GM12878 (cell line): ENCODE measurements at regions of chr11 and their contacts with region 1.

Region 1: DNA sequence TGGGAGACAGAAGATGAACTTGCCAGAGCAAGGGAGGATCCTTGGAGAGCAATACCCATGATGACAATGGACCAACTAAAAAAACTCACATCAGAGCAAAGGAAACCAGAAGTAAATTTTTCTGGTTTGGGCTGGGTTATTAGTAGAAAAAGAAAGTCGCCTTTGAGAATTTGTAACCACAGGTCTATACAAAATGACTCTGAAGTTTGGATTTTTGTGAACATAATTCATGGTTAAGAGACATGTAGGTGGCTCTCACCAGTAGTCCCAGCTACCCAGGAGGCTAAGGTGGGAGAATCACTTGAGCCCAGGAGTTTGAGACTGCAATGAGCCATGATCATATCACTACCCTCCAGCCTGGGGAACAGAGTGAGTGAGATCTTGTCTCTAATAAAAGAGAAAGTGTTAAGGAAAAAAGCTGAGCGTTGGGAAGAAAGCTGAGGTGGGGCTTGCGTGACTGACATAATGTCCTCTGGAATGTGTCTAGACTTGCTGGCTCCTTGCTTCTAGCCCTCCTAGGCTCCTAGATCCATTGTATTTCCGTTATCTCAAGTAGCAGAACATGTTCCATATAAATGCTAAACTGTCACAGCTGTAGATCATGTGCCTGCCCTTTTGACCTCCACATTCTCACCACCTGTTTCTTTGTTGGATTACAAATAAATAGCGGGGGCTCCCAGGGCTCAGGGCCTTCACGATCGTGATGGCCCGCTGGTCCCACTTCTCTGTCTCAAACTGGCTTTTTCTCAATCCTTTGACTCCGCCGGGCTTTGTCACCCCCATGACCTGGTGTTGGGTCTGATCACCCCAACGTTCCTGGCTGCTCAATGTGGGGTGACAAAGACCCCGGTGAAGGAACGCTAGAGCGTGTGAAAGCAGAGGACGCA is 56.2 kb upstream of the SC5D start:
- DNase-seq: peak; percentile 74
- ATAC-seq: peak; percentile 85
- H3K4me3 ChIP-seq: peak overlapping the region; percentile 57
- H3K27ac ChIP-seq: peak overlapping the region; percentile 95
- H3K4me1 ChIP-seq: peaks cover 32% of the 10 kb centered on the region
- H3K27me3 ChIP-seq: no peaks in the 10 kb centered on the region
- CTCF ChIP-seq: no peak
- EP300 ChIP-seq: no peak; a peak in 1 of 4 replicates
- POLR2A ChIP-seq: no peak
- RAD21 ChIP-seq: no peak

Region 2: DNA sequence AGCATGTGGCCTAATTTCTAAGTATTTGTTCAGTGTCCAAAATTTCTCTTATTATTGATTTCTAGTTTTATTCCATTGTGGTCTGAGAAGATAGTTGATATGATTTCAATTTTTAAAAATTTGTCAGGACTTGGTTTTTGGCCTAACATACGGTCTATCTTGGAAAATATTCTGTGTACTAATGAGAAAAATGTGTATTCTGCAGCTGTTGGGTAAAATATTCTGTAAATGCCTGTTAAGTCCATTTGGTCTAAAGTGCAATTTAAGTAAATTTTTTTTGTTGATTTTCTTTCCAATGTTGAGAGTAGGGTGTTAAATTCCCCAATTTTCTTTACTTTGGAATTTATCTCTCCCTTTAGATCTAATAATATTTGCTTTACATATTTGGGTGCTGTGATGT is 57.1 kb before region 1 on chr11:
- CTCF ChIA-PET with region 1: no interaction called
- POLR2A ChIA-PET with region 1: no interaction called
- RAD21 ChIA-PET with region 1: no interaction called
- SMC1A ChIA-PET with region 1: no interaction called
- in situ Hi-C with region 1: no loop called
- intact Hi-C with region 1: no loop called
- DNase-seq: no peak
- ATAC-seq: no peak
- H3K4me3 ChIP-seq: no peak overlapping the region
- H3K27ac ChIP-seq: no peak overlapping the region
- H3K4me1 ChIP-seq: no peaks in the 10 kb centered on the region
- H3K27me3 ChIP-seq: no peaks in the 10 kb centered on the region
- CTCF ChIP-seq: no peak
- EP300 ChIP-seq: no peak
- POLR2A ChIP-seq: no peak
- RAD21 ChIP-seq: no peak

Region 3: DNA sequence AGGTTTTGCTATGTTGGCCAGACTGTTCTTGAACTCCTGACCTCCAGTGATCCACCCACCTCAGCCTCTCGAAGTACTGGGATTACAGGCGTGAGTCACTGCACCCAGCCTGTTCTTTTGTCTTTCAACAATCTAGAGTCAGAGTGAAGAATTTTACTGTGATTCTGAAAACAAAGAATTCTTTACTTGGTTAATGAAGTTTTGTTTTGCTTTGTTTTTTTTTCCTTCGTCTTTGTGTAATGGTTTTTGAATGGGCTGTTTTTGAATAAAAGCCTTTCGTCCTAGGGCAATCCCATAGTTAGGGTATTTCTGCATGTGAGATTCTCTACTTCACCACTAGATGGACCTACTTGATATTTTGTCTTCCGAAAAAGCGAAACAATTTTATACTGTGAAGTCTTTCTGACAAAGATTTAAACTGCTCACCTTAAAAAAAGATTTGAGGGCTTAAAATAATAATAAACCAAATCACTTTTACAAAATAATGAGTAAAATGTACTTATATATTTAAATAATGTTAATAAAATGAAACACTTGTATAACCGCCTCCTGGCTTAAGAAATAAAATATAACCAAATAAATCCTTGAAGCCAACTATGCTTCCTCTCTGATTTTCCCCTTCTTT is 12.8 kb after region 1 on chr11:
- CTCF ChIA-PET with region 1: interaction called, 11 read pairs
- POLR2A ChIA-PET with region 1: no interaction called
- RAD21 ChIA-PET with region 1: interaction called, 5 read pairs
- SMC1A ChIA-PET with region 1: interaction called, 15 read pairs
- in situ Hi-C with region 1: no loop called
- intact Hi-C with region 1: no loop called
- DNase-seq: no peak
- ATAC-seq: peak; percentile 91
- H3K4me3 ChIP-seq: no peak overlapping the region
- H3K27ac ChIP-seq: no peak overlapping the region
- H3K4me1 ChIP-seq: no peaks in the 10 kb centered on the region
- H3K27me3 ChIP-seq: no peaks in the 10 kb centered on the region
- CTCF ChIP-seq: peak; percentile 60 to 66 (median 64); a peak in 5 of 6 replicates
- EP300 ChIP-seq: no peak
- POLR2A ChIP-seq: no peak
- RAD21 ChIP-seq: peak; percentile 65